Prostate gland (tissue), 2 donors: ENCODE measurements at regions of chr3 and their contacts with region 1.

Region 1: GRCh38 chr3:58299839-58300516 is 6.1 kb upstream of the RPP14 start:
- DNase-seq: no peak
- H3K4me3 ChIP-seq: no peak overlapping the region
- H3K27ac ChIP-seq: no peak overlapping the region
- H3K4me1 ChIP-seq: no peaks in the 10 kb centered on the region
- H3K27me3 ChIP-seq: no peaks in the 10 kb centered on the region
- CTCF ChIP-seq: peak in 3 of 4 experiments; percentile 51 to 73 (median 71)
- POLR2A ChIP-seq: no peak

Region 2: DNA sequence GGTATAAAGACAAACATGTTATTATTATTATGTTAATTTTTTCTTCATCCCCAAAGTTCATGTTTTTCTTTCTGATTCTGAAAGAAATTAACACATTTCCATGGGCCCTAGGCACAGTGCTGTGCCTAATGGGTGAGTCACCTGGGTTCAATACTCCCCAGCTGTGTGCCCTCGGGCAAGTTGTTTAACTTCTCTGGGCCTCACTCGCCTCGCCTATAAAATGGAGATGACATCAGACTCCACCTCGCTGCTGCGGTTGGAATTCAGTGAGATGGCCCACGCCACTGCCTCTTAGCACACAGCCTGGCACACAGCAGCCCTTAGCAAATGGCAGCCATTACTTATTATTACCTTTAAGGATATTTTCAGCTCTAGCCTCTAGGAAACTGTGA is 111.8 kb before region 1 on chr3:
- intact Hi-C with region 1: loop called (anchors 2 kb)
- DNase-seq: no peak
- H3K4me3 ChIP-seq: no peak overlapping the region
- H3K27ac ChIP-seq: no peak overlapping the region
- H3K4me1 ChIP-seq: no peaks in the 10 kb centered on the region
- H3K27me3 ChIP-seq: no peaks in the 10 kb centered on the region
- CTCF ChIP-seq: no peak
- POLR2A ChIP-seq: no peak

Region 3: DNA sequence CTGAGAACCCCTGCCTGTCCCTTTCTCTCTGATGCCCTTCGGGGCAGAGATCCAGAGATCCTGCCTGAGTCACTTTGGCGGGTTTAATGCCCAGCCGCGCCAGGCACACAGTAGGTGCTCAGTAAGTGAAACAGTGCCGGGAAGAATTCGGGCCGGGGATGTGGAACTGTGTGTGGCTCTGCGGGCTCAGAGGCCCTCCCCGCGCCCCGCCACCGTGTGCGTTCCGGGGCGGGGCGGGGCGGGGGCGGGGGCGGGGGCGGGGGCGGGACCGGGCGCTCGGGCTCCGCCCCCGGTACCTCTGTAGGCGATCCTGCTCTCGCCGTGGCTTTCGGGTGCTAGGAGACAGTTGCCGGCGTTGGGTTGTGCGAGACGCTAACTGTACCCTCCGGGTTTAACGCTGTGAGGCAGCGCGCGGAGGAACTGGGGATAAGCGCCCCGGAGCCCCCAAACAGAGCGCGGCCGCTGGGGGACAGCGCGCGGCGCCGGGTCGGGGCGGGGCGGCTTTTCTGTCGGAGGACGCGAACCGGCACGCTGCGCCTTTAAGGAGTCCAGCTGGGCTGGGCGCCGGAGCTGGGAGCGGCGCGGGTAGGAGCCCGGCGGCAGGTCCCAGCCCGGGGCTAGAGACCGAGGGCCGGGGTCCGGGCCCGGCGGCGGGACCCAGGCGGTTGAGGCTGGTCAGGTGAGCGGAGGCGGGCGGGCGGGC is 62.6 kb before region 1 on chr3 and contains the start of gene ABHD6:
- intact Hi-C with region 1: loop called (anchors 5 kb)
- DNase-seq: peak; percentile 58
- H3K4me3 ChIP-seq: peak within 1 kb of the TSS; percentile 89 to 93
- H3K27ac ChIP-seq: peak within 1 kb of the TSS; percentile 80 to 86
- H3K4me1 ChIP-seq: no peaks in the 10 kb centered on the region
- H3K27me3 ChIP-seq: no peaks in the 10 kb centered on the region
- CTCF ChIP-seq: peak; percentile 37 to 72 (median 64)
- POLR2A ChIP-seq: no peak
- total RNA-seq, gene ABHD6: 13.2 to 16.9 TPM